ENCODE measurements at regions of chr11 and their contacts with region 1.

Region 1: GRCh38 chr11:128290106-128290840 is 297.1 kb downstream of the ETS1 start:
- DNase-seq: peak; percentile 79
- H3K4me3 Mint-ChIP-seq: peak overlapping the region; percentile 92
- H3K27ac Mint-ChIP-seq: peak overlapping the region; percentile 97
- H3K4me1 Mint-ChIP-seq: peaks cover 87% of the 10 kb centered on the region
- H3K27me3 Mint-ChIP-seq: no peaks in the 10 kb centered on the region

Region 2: DNA sequence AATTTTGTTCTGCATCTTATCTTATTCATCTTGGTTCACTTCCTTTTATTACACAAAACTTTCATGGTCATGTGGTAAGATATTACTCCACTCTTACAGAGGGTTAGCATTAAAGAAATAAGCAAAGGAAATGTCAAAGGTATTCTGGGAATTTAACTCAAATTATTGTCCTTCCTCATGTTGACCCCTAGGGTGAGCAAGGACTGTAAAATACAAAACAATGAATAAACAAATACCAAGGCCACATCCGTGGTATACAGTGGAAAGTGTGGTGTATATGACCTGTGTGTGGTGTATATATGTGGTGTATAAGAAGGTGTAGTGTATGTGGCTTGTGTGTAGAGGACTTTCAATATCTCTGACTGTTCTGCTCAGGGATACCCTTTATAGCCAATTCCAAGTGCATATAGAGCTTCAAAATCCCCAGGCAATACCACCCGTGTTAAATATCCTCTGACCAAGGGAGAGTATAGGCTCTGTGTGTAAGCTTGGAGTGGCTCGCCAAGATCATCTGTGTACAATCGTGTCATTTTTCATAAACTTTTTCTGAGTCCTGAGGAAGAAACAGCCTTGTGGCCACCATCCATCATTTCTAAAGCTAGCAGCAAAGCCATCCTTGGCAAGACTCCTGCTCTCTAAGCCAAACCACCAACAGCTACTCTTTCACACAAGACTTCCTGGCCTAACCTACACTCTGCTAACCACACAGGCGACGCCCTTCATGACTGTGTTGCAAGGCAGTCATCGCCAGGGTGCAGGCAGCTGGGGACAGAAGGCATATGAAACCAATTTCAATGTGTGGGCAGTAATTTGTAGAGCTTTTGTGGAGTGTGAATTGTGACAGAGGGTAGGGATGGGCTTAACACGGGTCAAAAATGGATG is 250.9 kb before region 1 on chr11:
- CTCF ChIA-PET with region 1: interaction called, 3 read pairs
- POLR2A ChIA-PET with region 1: interaction called, 12 read pairs
- DNase-seq: peak; percentile 89
- H3K4me3 Mint-ChIP-seq: peak overlapping the region; percentile 64
- H3K27ac Mint-ChIP-seq: peak overlapping the region; percentile 98
- H3K4me1 Mint-ChIP-seq: peaks cover 48% of the 10 kb centered on the region
- H3K27me3 Mint-ChIP-seq: no peaks in the 10 kb centered on the region

Region 3: GRCh38 chr11:128342511-128343134 is 52.4 kb after region 1 on chr11:
- CTCF ChIA-PET with region 1: interaction called, 6 read pairs
- POLR2A ChIA-PET with region 1: interaction called, 29 read pairs
- DNase-seq: peak; percentile 79
- H3K4me3 Mint-ChIP-seq: peak overlapping the region; percentile 65
- H3K27ac Mint-ChIP-seq: peak overlapping the region; percentile 96
- H3K4me1 Mint-ChIP-seq: peaks cover 79% of the 10 kb centered on the region
- H3K27me3 Mint-ChIP-seq: no peaks in the 10 kb centered on the region

Region 4: DNA sequence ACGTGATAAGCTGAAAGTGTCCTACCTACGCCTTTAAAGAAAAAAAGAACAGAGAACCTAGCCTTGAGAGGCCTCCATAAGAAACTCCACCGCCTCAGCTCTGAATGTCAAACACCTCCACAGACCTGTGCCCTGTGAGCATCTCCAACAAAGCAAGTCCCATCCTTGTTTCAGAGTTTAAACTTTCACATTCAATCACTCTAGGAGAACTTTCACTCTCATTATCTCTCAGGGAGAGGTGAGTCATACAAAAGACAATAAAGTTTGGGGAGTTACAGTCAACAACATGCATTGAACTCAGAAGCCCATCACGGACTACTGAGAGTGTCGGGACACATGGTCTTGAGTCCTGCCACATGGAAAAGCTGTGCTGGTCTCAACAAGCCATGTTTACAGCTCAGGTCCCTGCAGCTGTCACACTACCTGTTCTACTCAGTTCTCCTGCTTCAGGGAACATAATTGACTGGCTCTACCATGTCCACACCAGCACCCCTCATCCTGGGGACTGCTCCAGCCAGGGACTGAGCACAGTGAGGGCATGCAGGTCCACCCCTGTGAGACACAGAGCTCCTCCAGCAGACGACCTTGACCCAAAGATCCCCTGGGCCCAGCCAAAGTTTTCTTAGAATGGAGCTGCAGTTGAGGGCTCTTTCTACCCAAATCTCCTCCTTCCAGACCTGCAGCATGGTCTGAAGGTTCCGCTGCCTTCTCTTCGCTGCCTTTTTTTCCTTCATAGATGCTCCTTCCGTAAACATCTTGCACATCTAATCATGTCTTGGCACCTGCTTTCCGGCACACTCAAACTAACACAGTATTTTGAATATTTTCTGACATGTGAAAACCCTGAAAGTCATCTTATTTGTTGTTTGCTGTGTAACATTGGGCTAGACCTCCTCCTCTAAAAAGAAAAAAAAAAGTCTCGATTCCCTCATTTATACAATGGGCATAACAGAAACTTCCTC is 182.1 kb after region 1 on chr11:
- CTCF ChIA-PET with region 1: interaction called, 51 read pairs
- POLR2A ChIA-PET with region 1: interaction called, 125 read pairs
- DNase-seq: no peak
- H3K4me3 Mint-ChIP-seq: peak overlapping the region; percentile 44
- H3K27ac Mint-ChIP-seq: peak overlapping the region; percentile 80
- H3K4me1 Mint-ChIP-seq: peaks cover 99% of the 10 kb centered on the region
- H3K27me3 Mint-ChIP-seq: no peaks in the 10 kb centered on the region

Region 5: GRCh38 chr11:128522055-128522942 is 232.0 kb after region 1 on chr11:
- CTCF ChIA-PET with region 1: interaction called, 36 read pairs
- POLR2A ChIA-PET with region 1: interaction called, 302 read pairs
- DNase-seq: peak; percentile 94
- H3K4me3 Mint-ChIP-seq: peak overlapping the region; percentile 97
- H3K27ac Mint-ChIP-seq: peak overlapping the region; percentile 88
- H3K4me1 Mint-ChIP-seq: peaks cover 44% of the 10 kb centered on the region
- H3K27me3 Mint-ChIP-seq: no peaks in the 10 kb centered on the region

Region 6: DNA sequence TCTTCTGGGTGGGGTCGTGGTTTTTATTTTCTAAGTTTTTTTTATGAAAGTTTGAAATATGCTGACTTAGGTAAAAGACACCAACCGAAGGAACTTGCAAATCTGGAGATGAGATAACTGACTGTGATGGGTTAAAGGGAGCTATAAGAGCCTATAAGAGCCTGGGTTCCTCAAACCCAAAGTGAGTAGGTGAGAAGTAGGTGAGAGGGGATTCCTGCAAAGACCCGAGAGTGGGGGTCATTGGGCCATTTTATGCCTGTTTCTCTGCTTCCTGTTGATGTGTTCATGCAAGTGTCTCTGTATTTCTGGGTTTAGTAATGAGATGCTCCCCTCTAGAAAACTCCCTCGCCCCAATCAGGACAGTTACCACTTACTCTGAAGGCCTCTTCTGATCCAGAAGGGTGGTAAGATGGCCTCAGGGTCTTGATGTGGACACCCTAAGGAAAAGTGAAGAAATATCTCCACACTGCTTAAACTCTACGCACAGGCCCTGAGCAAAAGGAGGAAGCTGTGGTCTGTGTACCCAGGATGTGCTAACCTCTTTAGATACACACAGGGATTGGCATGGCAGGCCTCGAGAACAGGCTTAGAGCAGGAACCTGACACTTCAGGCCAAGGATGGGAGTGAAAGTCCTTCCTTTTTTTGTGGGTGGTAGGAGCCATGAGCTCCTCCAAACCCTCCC is 405.4 kb after region 1 on chr11:
- CTCF ChIA-PET with region 1: no interaction called
- POLR2A ChIA-PET with region 1: interaction called, 16 read pairs
- DNase-seq: peak; percentile 67
- H3K4me3 Mint-ChIP-seq: peak overlapping the region; percentile 98
- H3K27ac Mint-ChIP-seq: peak overlapping the region; percentile 97
- H3K4me1 Mint-ChIP-seq: peaks cover 58% of the 10 kb centered on the region
- H3K27me3 Mint-ChIP-seq: peaks cover 10% of the 10 kb centered on the region